ENCODE measurements at regions of chr11 and their contacts with region 1.

Region 1: GRCh38 chr11:92750800-92751199 is 218.7 kb upstream of the MTNR1B start:
- DNase-seq: no peak
- H3K4me3 ChIP-seq: no peak overlapping the region
- H3K27ac ChIP-seq: no peak overlapping the region
- H3K4me1 ChIP-seq: no peaks in the 10 kb centered on the region
- H3K27me3 ChIP-seq: no peaks in the 10 kb centered on the region
- CTCF ChIP-seq: no peak
- EP300 ChIP-seq: no peak
- POLR2A ChIP-seq: no peak
- RAD21 ChIP-seq: no peak

Region 2: DNA sequence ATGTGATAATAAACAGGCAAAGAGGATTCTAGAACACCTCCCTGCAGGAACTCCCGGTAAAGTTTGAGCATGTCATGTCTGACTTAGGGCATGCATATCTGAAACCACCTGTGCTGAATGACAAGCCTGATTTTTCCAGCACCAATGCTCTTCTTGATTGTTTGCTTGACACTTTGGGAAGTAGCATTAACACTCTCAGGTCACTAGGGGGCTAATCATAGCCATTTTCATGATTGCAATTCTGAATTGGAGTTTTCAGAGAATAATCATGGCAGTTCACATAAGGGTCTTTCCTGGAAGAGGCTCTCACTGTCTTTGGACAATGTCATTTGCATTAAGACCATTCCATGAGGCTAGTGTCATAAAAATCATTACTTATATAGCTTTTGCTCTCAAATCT is 15.8 kb before region 1 on chr11:
- CTCF ChIA-PET with region 1: interaction called, 10 read pairs
- POLR2A ChIA-PET with region 1: no interaction called
- DNase-seq: no peak
- H3K4me3 ChIP-seq: no peak overlapping the region
- H3K27ac ChIP-seq: no peak overlapping the region
- H3K4me1 ChIP-seq: no peaks in the 10 kb centered on the region
- H3K27me3 ChIP-seq: no peaks in the 10 kb centered on the region
- CTCF ChIP-seq: peak in 2 of 3 experiments; percentile 43 to 64; a peak in 3 of 4 replicates
- EP300 ChIP-seq: no peak
- POLR2A ChIP-seq: no peak
- RAD21 ChIP-seq: peak; percentile 52 to 61

Measured in H1 (cell line).